ENCODE measurements at regions of chr2 and their contacts with region 1.

Region 1: DNA sequence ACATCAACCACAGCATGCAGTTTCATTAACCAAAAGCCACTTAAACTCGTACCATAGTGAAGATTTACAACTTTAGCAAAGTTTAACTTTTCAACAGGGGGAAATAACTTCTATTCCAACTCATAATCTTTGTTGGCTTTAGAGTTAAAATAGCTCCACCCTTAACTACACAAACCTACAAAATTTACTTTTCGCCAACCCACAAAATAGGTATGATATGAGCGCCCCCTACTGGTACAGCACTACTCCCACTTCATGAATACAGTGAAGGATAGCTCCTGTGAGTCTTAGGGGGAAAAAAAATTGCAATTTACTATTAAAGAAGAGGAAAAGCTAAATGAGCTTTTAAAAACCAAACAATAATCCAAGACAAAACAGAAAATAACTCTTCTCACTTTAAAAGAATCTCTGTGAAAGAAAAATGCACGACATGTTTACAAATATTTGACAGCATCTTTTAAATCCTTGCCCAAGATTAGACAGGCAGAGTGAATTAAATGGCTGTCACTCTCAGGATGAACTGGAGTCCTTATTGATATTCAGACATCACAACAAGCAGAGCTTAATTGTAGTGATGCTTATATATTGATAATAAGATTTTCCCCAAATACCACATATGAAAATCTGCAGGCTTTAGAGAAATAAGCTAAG is 32.2 kb downstream of the TMEFF2 start:
- DNase-seq: peak; percentile 21
- H3K4me3 ChIP-seq: no peak overlapping the region
- H3K27me3 ChIP-seq: peaks cover 1% of the 10 kb centered on the region; the same call in 1 of the 2 replicates
- CTCF ChIP-seq: peak; percentile 86

Region 2: GRCh38 chr2:191806396-191806795 is 356.1 kb before region 1 on chr2:
- CTCF ChIA-PET with region 1: interaction called, 232 read pairs
- POLR2A ChIA-PET with region 1: no interaction called
- DNase-seq: no peak
- H3K4me3 ChIP-seq: no peak overlapping the region
- H3K27me3 ChIP-seq: no peaks in the 10 kb centered on the region
- CTCF ChIP-seq: no peak

Region 3: GRCh38 chr2:192064459-192064858 is 98.1 kb before region 1 on chr2:
- CTCF ChIA-PET with region 1: no interaction called
- POLR2A ChIA-PET with region 1: no interaction called
- DNase-seq: no peak
- H3K4me3 ChIP-seq: no peak overlapping the region
- H3K27me3 ChIP-seq: no peaks in the 10 kb centered on the region
- CTCF ChIP-seq: no peak

Region 4: GRCh38 chr2:192184349-192184748 is 21.8 kb after region 1 on chr2:
- CTCF ChIA-PET with region 1: no interaction called
- POLR2A ChIA-PET with region 1: no interaction called
- DNase-seq: no peak
- H3K4me3 ChIP-seq: no peak overlapping the region
- H3K27me3 ChIP-seq: peaks cover 4% of the 10 kb centered on the region
- CTCF ChIP-seq: no peak